HCT116 (cell line): ENCODE measurements at regions of chr5 and their contacts with region 1.

Region 1: GRCh38 chr5:106408570-106408969 is 1262.2 kb downstream of the EFNA5 start:
- DNase-seq: no peak
- ATAC-seq: no peak
- H3K4me3 ChIP-seq: no peak overlapping the region
- H3K27ac ChIP-seq: no peak overlapping the region
- H3K4me1 ChIP-seq: no peaks in the 10 kb centered on the region
- H3K27me3 ChIP-seq: no peaks in the 10 kb centered on the region
- CTCF ChIP-seq: no peak
- POLR2A ChIP-seq: no peak
- RAD21 ChIP-seq: no peak

Region 2: GRCh38 chr5:106367263-106367662 is 41.3 kb before region 1 on chr5:
- CTCF ChIA-PET with region 1: no interaction called
- POLR2A ChIA-PET with region 1: no interaction called
- RAD21 ChIA-PET with region 1: no interaction called
- intact Hi-C with region 1: loop called (anchors 1 kb)
- DNase-seq: no peak
- ATAC-seq: no peak
- H3K4me3 ChIP-seq: no peak overlapping the region
- H3K27ac ChIP-seq: no peak overlapping the region
- H3K4me1 ChIP-seq: no peaks in the 10 kb centered on the region
- H3K27me3 ChIP-seq: no peaks in the 10 kb centered on the region
- CTCF ChIP-seq: no peak
- POLR2A ChIP-seq: no peak
- RAD21 ChIP-seq: no peak

Region 3: DNA sequence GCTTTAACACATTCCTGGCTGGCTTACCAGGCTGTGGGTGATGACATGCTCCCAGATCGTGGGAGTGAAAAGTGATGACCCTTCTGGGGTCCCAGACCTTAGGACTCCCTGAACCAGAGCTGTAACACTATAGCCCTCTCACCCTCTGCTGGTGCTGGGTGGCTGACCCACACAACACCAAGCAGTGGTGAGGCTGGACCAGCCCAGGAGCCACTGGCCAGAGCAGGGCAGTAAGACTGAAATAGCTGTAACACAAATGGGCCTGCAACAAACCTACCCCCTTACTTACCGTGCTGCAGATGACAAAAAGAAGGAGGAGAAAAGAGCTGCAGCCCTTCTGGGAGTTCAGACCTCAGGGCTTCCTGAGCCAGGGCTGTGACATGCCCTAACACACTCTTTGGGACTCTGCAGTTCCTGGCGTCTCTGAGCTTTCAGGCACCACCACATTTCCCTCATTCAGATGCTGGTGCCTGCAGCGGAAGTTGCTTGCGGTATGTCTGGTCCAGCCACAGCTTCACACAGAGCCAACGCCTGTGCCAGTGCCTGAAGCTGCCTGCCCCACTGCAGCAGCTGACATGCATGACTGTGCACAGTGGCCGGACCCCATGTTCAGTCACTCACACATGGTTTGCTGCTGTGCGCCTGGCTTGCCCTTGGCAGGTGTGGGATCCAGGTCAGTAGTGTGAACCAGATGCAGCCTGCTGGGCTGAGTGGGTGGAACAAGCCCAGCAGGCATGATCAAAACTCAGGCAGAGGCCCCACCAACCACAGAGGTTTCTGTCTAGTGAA is 14.7 kb after region 1 on chr5:
- CTCF ChIA-PET with region 1: no interaction called
- POLR2A ChIA-PET with region 1: no interaction called
- RAD21 ChIA-PET with region 1: no interaction called
- intact Hi-C with region 1: no loop called
- DNase-seq: no peak
- ATAC-seq: no peak
- H3K4me3 ChIP-seq: no peak overlapping the region
- H3K27ac ChIP-seq: no peak overlapping the region
- H3K4me1 ChIP-seq: no peaks in the 10 kb centered on the region
- H3K27me3 ChIP-seq: no peaks in the 10 kb centered on the region
- CTCF ChIP-seq: no peak
- POLR2A ChIP-seq: no peak
- RAD21 ChIP-seq: no peak